ENCODE measurements at regions of chr19 and their contacts with region 1.

Region 1: GRCh38 chr19:17616961-17617806 is 61.7 kb downstream of the COLGALT1 start:
- DNase-seq: no peak
- ATAC-seq: no peak
- H3K4me3 ChIP-seq: peak overlapping the region in 3 of 12 donors; percentile 5 to 36 (median 23)
- H3K27ac ChIP-seq: no peak overlapping the region
- H3K4me1 ChIP-seq: peaks cover 0 to 10% (median 0%) of the 10 kb centered on the region in 12 donors
- H3K27me3 ChIP-seq: peaks cover 0 to 37% (median 9%) of the 10 kb centered on the region in 9 donors
- CTCF ChIP-seq: no peak
- POLR2A ChIP-seq: no peak

Region 2: GRCh38 chr19:17565611-17566010 is 51.6 kb before region 1 on chr19:
- intact Hi-C with region 1: no loop called
- DNase-seq: no peak
- ATAC-seq: peak in 3 of 4 donors; percentile 40 to 66 (median 53)
- H3K4me3 ChIP-seq: no peak overlapping the region
- H3K27ac ChIP-seq: peak overlapping the region in 9 of 12 donors; percentile 10 to 54 (median 30)
- H3K4me1 ChIP-seq: peaks cover 0 to 33% (median 16%) of the 10 kb centered on the region in 12 donors
- H3K27me3 ChIP-seq: no peaks in the 10 kb centered on the region
- CTCF ChIP-seq: no peak
- POLR2A ChIP-seq: no peak

Region 3: DNA sequence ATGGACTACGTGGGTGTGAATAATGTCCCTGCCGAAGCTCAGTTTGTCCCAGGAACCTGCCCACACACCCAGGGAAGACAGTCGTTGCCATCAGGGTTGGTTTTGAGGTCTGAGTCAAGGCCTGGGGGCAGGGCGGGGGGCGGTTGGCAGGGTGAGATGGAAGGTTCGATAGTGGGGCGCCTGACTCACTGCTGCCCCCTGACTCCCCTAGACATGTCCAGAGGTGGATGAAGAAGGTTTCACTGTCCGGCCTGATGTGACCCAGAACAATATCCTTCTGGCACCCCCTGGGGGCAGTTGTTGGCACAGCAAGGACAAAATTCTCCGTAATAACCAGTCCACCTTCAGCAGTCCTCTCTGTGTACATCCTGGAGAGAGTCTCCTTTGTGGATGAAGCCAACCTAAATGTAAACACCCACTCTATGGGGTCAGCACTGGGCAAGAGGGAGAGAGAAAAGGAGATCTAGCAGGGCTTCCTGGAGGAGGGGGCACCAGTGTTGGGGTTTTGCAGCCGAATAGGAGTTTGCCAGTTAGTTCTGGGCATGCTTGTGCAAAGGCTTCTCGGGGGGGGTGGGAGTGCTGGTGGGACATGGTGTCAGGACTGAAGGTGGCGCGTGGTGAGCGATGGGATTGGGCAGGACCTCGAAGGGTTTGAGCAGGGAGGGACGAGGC is 158.2 kb after region 1 on chr19:
- intact Hi-C with region 1: loop called in 1 of 10 experiments (anchors 10 kb)
- DNase-seq: no peak
- ATAC-seq: no peak
- H3K4me3 ChIP-seq: no peak overlapping the region
- H3K27ac ChIP-seq: no peak overlapping the region
- H3K4me1 ChIP-seq: peaks cover 0 to 9% (median 0%) of the 10 kb centered on the region in 12 donors
- H3K27me3 ChIP-seq: peaks cover 0 to 56% (median 21%) of the 10 kb centered on the region in 9 donors
- CTCF ChIP-seq: peak in 7 of 12 donors; percentile 17 to 49 (median 43)
- POLR2A ChIP-seq: no peak

Region 4: DNA sequence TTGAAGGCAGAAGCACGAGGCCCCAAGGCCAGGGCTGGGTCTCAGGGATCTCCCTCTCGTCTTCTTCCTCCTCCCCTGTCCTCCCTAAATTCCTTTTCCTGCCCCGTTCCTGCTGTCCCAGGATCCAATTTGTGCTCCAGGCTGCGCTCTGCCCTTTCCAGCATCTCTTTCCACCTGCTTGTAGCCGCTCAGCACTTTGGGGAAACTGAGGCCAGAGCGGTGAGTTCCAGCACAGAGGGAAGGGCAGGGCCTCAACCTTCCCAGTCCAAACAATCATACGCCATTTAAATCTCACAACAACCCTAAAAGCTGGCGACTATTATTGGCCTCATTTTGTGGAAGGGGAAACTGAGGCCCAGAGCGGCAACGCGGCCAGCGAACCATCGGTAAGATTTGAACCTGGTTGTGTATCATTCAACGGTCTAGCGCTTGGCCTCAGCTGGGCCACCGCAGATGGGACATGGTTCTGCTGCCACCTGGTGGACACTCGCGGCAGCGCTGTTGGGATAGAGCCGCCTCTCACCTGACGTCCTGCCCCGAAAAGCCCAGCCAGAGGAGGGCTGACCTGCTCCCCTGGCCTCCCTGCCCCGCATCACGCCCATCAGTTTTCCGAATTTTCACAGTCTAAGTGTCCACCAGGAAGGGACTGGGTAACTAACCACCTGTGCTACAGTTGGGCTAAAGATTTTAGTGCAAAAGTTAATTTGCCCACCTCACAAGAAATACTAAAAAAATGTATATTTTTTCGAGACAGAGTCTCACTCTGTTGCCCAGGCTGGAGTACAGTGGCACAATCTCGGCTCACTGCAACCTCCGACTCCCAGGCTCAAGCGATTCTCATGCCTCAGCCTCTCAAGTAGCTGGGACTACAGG is 238.3 kb after region 1 on chr19:
- intact Hi-C with region 1: no loop called
- DNase-seq: peak; percentile 78 to 94 (median 85)
- ATAC-seq: peak in 3 of 4 donors; percentile 41 to 53 (median 48)
- H3K4me3 ChIP-seq: no peak overlapping the region
- H3K27ac ChIP-seq: no peak overlapping the region
- H3K4me1 ChIP-seq: peaks cover under 1 to 25% (median 3%) of the 10 kb centered on the region in 12 donors
- H3K27me3 ChIP-seq: no peaks in the 10 kb centered on the region
- CTCF ChIP-seq: peak; percentile 93 to 99 (median 96)
- POLR2A ChIP-seq: no peak

Measured in heart left ventricle (tissue), 16 donors.